ENCODE measurements at regions of chr5 and their contacts with region 1.

Region 1: GRCh38 chr5:56900858-56901578 is 8.4 kb upstream of the SETD9 start:
- DNase-seq: no peak
- ATAC-seq: peak in 3 of 4 donors; percentile 47 to 66 (median 53)
- H3K4me3 ChIP-seq: no peak overlapping the region
- H3K27ac ChIP-seq: no peak overlapping the region
- H3K4me1 ChIP-seq: peaks cover 0 to 7% (median 0%) of the 10 kb centered on the region in 12 donors
- H3K27me3 ChIP-seq: no peaks in the 10 kb centered on the region
- CTCF ChIP-seq: peak; percentile 55 to 84 (median 76)
- POLR2A ChIP-seq: no peak

Region 2: GRCh38 chr5:57137401-57137800 is 236.4 kb after region 1 on chr5:
- intact Hi-C with region 1: loop called in 8 of 10 experiments (anchors 2 to 10 kb)
- DNase-seq: no peak
- ATAC-seq: no peak
- H3K4me3 ChIP-seq: no peak overlapping the region
- H3K27ac ChIP-seq: no peak overlapping the region
- H3K4me1 ChIP-seq: no peaks in the 10 kb centered on the region
- H3K27me3 ChIP-seq: peaks cover 0 to 2% (median 0%) of the 10 kb centered on the region in 9 donors
- CTCF ChIP-seq: no peak
- POLR2A ChIP-seq: no peak

Region 3: DNA sequence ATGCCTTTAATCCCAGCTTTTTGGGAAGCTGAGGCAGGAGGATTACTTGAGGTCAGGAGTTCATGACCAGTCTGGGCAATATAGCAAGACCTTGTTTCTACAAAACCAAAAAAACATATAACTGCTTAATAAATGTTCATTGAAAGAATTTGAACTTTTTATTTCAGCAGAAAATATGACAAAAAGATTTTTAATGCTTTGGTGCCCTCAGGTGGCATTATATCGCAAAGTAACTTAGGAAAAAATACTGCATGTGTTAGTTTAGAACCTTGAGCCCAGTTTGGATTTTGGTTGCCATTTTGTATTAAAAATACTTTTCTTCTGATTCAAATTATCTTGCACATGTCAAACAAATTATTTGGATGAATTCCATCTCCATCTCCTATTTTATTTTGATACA is 376.1 kb after region 1 on chr5:
- intact Hi-C with region 1: loop called in 1 of 10 experiments (anchors 5 kb)
- DNase-seq: no peak
- ATAC-seq: no peak
- H3K4me3 ChIP-seq: no peak overlapping the region
- H3K27ac ChIP-seq: no peak overlapping the region
- H3K4me1 ChIP-seq: no peaks in the 10 kb centered on the region
- H3K27me3 ChIP-seq: no peaks in the 10 kb centered on the region
- CTCF ChIP-seq: peak in 6 of 12 donors; percentile 9 to 33 (median 24)
- POLR2A ChIP-seq: no peak

Measured in heart left ventricle (tissue), 16 donors.